ENCODE measurements at regions of chr1 and their contacts with region 1.

Region 1: DNA sequence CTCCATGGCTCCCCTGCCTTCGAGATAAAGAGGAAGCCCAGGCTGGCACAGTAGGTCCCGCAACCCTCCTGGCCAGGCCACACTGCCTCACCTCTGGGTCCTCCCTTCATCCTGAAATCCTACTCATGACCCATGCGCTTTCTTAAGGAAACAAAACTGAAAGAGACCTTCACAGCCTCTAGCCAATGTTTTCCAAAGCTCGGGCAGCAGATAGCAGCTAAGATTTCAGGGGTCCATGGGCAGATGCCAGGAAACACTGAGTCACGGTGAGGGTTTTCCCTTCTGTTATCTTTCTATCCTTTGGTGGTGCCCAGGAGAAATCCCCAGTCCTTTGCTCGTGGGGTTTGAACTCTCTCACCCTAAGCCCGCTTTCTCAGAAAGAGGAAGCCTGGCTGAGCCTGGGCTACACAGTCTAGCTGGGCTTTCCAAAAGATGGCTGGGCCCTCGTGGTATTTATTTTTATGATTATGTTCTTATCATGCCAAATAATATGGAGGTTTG is 26.6 kb downstream of the TTC39A start:
- DNase-seq: peak; percentile 66
- ATAC-seq: peak; percentile 72
- H3K4me3 Mint-ChIP-seq: no peak overlapping the region
- H3K27ac Mint-ChIP-seq: peak overlapping the region; percentile 26
- H3K4me1 Mint-ChIP-seq: peaks cover 24% of the 10 kb centered on the region
- H3K27me3 Mint-ChIP-seq: no peaks in the 10 kb centered on the region
- CTCF ChIP-seq: no peak

Region 2: DNA sequence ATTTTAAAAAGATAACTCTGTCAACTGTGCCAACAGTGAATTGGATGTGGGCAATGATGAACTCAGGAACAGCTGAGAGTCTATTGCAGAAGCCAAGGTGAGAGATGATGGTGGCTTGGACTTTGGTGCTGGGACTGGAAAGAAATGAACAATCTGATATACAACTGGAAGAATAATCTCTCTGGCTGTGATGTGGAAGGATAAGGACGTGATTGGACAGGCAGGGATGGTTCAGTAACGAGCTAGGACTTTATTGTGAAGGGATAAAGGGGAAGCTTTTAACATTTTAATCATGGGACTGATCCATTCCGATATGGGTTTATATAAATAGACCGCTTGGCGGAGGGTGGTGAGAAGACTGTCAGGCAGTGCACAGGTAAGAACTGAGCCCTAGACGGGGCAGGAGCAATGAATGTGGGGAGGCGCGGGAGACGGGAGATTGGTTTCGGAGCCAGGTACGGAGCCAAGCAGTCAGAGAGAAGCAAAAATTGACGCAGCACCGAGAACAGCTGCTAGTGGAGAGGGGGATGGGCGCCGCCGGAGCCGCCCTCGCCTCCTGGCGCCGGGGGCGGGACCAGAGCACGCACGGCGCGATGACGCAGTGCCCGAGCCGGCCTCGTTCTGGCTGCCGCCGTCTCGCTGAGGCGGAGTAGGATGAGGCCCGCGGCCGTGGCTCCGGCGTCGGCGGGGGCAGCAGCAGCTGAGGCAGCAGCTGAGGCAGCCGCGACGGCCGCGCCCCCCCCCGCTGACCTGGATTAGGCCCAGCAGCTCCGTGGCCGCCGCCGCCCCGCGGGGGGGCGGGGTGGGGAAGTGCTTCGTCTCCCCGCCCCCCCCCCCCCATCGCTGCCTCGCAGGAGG is 67.9 kb before region 1 on chr1 and contains the start of gene RNF11:
- CTCF ChIA-PET with region 1: no interaction called
- POLR2A ChIA-PET with region 1: no interaction called
- intact Hi-C with region 1: loop called (anchors 5 kb)
- DNase-seq: peak; percentile 94
- ATAC-seq: peak; percentile 95
- H3K4me3 Mint-ChIP-seq: peak within 1 kb of the TSS; percentile 80
- H3K27ac Mint-ChIP-seq: peak within 1 kb of the TSS; percentile 90
- H3K4me1 Mint-ChIP-seq: peaks cover 36% of the 10 kb centered on the region
- H3K27me3 Mint-ChIP-seq: no peaks in the 10 kb centered on the region
- CTCF ChIP-seq: no peak
- total RNA-seq, gene RNF11: 21.5 to 22.6 TPM

Region 3: DNA sequence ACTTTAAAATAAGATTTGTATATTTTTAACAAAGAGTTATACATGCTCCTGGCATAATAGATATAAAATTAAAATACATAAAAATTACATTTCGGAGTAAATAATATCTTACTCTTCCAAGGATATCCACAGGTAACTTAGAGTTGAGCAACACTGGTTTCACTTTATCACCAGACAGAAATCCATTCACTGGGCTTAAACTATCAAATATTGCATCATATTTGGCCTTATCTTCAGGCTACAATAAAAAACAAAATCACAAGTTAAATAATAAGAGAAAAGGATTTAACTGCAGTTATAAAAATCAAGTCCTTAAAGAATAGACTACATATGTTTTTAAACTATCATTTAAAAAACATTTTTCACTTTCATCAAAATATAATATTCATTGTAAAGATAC is 159.8 kb after region 1 on chr1:
- CTCF ChIA-PET with region 1: no interaction called
- POLR2A ChIA-PET with region 1: no interaction called
- intact Hi-C with region 1: no loop called
- DNase-seq: no peak
- ATAC-seq: no peak
- H3K4me3 Mint-ChIP-seq: no peak overlapping the region
- H3K27ac Mint-ChIP-seq: no peak overlapping the region
- H3K4me1 Mint-ChIP-seq: no peaks in the 10 kb centered on the region
- H3K27me3 Mint-ChIP-seq: no peaks in the 10 kb centered on the region
- CTCF ChIP-seq: no peak

Measured in activated CD8-positive, alpha-beta T cell treated with anti-CD3 and anti-CD28 coated beads for 36 hours (primary cell).